ENCODE measurements at regions of chr3 and their contacts with region 1.

Region 1: GRCh38 chr3:172622916-172623700 is 87.8 kb downstream of the NCEH1 start:
- DNase-seq: peak; percentile 51
- ATAC-seq: peak; percentile 47
- H3K4me3 Mint-ChIP-seq: no peak overlapping the region
- H3K27ac Mint-ChIP-seq: no peak overlapping the region
- H3K4me1 Mint-ChIP-seq: peaks cover 11% of the 10 kb centered on the region
- H3K27me3 Mint-ChIP-seq: peaks cover 3% of the 10 kb centered on the region
- CTCF ChIP-seq: peak; percentile 85

Region 2: GRCh38 chr3:172580680-172581401 is 42.3 kb before region 1 on chr3:
- CTCF ChIA-PET with region 1: no interaction called
- POLR2A ChIA-PET with region 1: no interaction called
- intact Hi-C with region 1: no loop called
- DNase-seq: no peak
- ATAC-seq: peak; percentile 53
- H3K4me3 Mint-ChIP-seq: peak overlapping the region; percentile 37
- H3K27ac Mint-ChIP-seq: peak overlapping the region; percentile 86
- H3K4me1 Mint-ChIP-seq: peaks cover 78% of the 10 kb centered on the region
- H3K27me3 Mint-ChIP-seq: no peaks in the 10 kb centered on the region
- CTCF ChIP-seq: no peak

Region 3: DNA sequence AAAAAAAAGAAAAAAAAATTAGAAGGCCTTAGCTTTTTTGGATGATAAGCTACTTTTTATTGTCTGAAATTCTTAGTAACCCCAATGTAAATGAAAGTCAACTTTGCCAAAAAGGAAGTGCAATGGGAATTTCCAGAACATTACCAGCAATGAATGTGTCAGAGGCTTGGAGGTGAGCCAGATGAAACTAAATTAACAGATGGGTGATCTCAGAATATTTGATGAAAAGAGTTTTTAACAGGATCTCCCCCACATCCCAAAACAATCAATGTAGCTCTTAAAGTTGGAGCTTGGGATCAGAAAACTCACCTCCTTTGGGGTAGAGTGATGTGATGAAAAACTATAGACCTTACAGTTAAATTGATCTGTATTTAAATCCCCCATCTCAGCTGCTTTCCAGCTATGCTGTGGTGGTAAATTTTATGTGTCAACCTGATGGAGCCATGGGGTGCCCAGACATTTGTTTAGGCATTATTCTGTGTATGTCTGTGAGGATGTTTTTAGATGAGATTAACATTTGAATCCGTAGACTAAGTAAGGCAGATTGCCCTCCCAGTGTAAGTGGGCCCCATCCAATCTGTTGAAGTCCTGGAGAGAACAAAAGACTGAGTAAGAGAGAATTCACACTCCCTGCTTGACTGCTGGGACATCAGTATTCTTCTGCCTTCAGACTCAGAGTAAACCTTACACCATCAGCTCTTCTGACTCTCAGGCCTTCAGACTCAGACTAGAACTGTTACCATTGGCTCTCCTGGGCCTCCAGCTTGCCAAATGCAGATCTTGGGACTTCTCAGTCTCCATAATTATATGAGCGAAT is 15.6 kb before region 1 on chr3:
- CTCF ChIA-PET with region 1: interaction called, 17 read pairs
- POLR2A ChIA-PET with region 1: no interaction called
- intact Hi-C with region 1: no loop called
- DNase-seq: no peak
- ATAC-seq: peak; percentile 27
- H3K4me3 Mint-ChIP-seq: no peak overlapping the region
- H3K27ac Mint-ChIP-seq: no peak overlapping the region
- H3K4me1 Mint-ChIP-seq: peaks cover 7% of the 10 kb centered on the region
- H3K27me3 Mint-ChIP-seq: peaks cover 4% of the 10 kb centered on the region
- CTCF ChIP-seq: no peak

Region 4: DNA sequence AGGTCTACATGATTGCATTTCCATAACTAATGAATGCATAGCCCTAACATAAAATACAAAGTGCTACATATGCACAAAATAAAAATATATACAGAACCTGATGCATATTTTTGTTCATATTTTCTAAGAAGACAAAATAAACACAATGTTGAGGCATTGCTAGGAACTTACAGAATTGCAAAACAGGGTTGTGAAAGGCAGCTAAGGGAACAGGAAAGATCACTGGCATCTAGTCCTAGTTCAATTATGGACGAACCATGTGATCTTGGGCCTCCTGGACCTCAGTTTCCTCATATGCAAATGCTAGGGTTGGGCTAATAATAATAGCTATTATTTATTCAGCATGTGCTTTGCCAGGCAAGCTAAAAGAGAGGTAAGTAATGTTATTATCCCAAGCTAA is 103.3 kb after region 1 on chr3:
- CTCF ChIA-PET with region 1: no interaction called
- POLR2A ChIA-PET with region 1: no interaction called
- intact Hi-C with region 1: no loop called
- DNase-seq: no peak
- ATAC-seq: no peak
- H3K4me3 Mint-ChIP-seq: no peak overlapping the region
- H3K27ac Mint-ChIP-seq: no peak overlapping the region
- H3K4me1 Mint-ChIP-seq: no peaks in the 10 kb centered on the region
- H3K27me3 Mint-ChIP-seq: no peaks in the 10 kb centered on the region
- CTCF ChIP-seq: no peak